H1 (cell line): ENCODE measurements at regions of chr21 and their contacts with region 1.

Region 1: DNA sequence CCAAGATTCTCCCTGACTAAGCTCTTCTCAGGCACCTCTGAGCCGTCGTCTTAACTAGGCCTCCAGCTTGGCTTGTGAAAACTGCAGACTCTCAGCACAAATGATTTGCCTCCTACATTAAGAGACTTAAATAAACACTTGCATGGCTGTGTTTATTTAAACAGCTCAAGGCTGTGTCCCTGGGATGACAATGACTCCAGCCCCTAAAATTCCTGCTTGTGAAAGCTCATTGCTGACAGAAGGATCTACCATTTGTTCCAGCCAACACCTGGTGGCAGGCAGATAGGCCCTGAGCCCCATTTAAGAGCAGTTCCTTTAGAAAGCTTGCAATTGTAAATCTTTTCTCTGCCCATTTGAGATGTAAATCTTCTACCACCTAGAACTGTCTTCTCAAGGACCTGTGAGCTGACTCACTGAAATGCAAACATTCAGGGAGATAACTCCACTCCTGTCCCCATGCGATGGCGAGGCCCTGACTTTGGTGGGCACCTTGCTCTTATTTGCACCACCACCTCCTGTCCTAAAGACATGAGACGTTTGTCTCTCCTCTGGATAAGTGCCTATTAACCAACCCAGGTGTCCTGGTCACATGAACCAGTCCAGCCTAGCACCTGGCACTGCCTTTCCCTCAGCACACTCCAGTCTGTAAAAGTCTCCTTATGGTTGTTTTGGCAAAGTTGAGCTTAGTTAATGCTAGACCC is 15.1 kb upstream of the PCP4 start:
- DNase-seq: no peak
- H3K4me3 ChIP-seq: no peak overlapping the region
- H3K27ac ChIP-seq: no peak overlapping the region
- H3K4me1 ChIP-seq: 0 out of 7 replicates have a peak, but pooled peaks cover 0 to 4% (median 0%) of the 10 kb centered on the region in 4 experiments
- H3K27me3 ChIP-seq: no peaks in the 10 kb centered on the region
- CTCF ChIP-seq: no peak
- EP300 ChIP-seq: no peak
- POLR2A ChIP-seq: no peak
- RAD21 ChIP-seq: no peak

Region 2: GRCh38 chr21:39730418-39731170 is 121.6 kb before region 1 on chr21:
- CTCF ChIA-PET with region 1: no interaction called
- POLR2A ChIA-PET with region 1: no interaction called
- DNase-seq: no peak
- H3K4me3 ChIP-seq: no peak overlapping the region
- H3K27ac ChIP-seq: no peak overlapping the region
- H3K4me1 ChIP-seq: 0 out of 7 replicates have a peak, but pooled peaks cover 0 to 3% (median 0%) of the 10 kb centered on the region in 4 experiments
- H3K27me3 ChIP-seq: no peaks in the 10 kb centered on the region
- CTCF ChIP-seq: no peak
- EP300 ChIP-seq: no peak
- POLR2A ChIP-seq: no peak
- RAD21 ChIP-seq: no peak

Region 3: DNA sequence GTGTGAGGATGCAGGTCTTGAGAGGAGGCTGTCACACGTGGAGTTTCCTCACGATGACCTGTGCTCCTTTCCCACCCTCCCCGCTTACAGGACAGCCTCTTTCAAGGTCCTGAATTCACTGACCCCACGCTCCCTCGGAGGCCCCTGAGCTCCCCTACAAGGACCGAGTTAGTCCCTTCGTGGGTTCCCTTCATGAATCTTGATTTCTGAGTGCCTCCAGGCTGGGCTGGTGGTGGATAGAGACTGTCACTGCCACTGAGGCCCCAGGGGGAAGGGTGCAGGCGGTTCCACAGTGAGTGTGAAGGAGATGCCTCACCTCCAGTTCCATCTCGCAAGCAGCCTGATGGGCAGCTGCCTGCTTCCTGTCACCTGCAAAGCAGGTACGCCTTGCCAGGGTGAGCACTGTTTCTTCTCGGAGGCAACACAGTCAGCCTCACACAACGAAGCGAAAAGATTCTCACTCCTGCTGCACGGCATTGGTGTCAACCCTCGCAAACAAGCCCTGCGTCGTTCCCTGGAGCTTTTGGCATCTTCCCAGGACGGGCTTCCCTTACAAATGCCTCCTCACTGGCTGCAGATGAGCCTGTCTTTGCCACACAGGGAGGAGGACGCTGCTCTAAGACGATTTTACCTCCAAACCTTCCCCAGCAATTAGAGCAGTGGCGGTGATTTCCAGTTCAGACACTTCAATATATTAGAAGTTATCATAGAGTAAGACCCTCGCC is 11.6 kb before region 1 on chr21:
- CTCF ChIA-PET with region 1: interaction called, 12 read pairs
- POLR2A ChIA-PET with region 1: no interaction called
- DNase-seq: no peak
- H3K4me3 ChIP-seq: no peak overlapping the region
- H3K27ac ChIP-seq: no peak overlapping the region
- H3K4me1 ChIP-seq: peaks cover 0 to 7% (median 0%) of the 10 kb centered on the region in 4 experiments; a peak in 1 of 7 replicates
- H3K27me3 ChIP-seq: no peaks in the 10 kb centered on the region
- CTCF ChIP-seq: no peak
- EP300 ChIP-seq: no peak
- POLR2A ChIP-seq: no peak
- RAD21 ChIP-seq: no peak

Region 4: GRCh38 chr21:39893416-39893815 is 41.2 kb after region 1 on chr21:
- CTCF ChIA-PET with region 1: no interaction called
- POLR2A ChIA-PET with region 1: no interaction called
- DNase-seq: no peak
- H3K4me3 ChIP-seq: no peak overlapping the region
- H3K27ac ChIP-seq: no peak overlapping the region
- H3K4me1 ChIP-seq: no peaks in the 10 kb centered on the region
- H3K27me3 ChIP-seq: no peaks in the 10 kb centered on the region
- CTCF ChIP-seq: no peak
- EP300 ChIP-seq: no peak
- POLR2A ChIP-seq: no peak
- RAD21 ChIP-seq: no peak

Region 5: DNA sequence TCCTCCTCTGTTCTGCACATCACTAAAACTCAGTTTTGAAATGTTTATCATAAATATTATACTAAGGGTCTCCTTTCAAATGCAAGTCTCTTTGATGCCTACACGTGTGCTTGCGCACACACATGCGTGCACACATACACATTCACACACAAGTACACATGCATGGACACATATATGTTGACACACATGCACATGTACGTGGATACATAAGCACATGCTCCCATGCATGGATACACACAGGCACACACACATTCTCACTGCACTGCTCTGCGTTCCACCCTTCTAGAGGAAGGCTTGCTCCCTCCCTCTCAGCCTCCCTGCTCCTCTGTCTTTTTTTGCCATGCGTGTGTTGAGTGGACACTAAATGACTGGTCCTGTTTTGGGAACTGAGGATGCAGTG is 177.7 kb after region 1 on chr21:
- CTCF ChIA-PET with region 1: no interaction called
- POLR2A ChIA-PET with region 1: no interaction called
- DNase-seq: no peak
- H3K4me3 ChIP-seq: no peak overlapping the region
- H3K27ac ChIP-seq: no peak overlapping the region
- H3K4me1 ChIP-seq: peaks cover 0 to 2% (median 0%) of the 10 kb centered on the region in 4 experiments; a peak in 1 of 7 replicates
- H3K27me3 ChIP-seq: peaks cover 0 to 2% (median 0%) of the 10 kb centered on the region in 4 experiments; a peak in 1 of 7 replicates
- CTCF ChIP-seq: no peak
- EP300 ChIP-seq: no peak
- POLR2A ChIP-seq: no peak
- RAD21 ChIP-seq: no peak